Activated CD8-positive, alpha-beta T cell treated with anti-CD3 and anti-CD28 coated beads for 36 hours (primary cell): ENCODE measurements at regions of chr6 and their contacts with region 1.

Region 1: DNA sequence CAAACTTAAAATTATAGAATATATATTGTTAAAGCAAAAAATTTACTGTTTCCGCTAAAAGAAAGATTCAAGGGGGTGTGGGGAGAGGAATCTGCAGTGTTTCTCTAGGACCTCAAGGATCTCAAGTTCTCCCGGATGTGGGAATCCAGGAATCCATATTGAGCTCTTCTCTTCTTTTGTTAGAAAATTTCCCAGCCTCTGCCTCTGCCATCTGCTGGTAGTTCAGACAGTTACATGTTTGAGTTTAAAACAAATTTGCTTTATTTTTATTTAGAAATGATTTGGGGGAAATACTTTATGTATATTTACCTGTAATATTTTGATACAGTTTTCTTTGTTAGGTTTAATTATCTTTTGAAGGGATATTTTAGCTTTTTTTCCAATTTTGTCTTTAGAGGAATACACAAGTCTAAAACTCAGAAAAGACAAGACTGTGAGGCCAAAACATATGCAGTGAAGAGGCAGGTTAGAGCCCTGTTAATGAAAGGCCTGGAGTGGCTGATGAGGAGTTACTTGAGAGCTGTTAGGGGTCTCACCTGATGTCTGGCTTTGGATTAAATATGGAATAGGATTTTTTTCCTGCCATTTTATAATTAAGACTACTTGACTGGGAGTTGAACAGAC is 268.8 kb downstream of the ARID1B start:
- DNase-seq: no peak
- ATAC-seq: no peak
- H3K4me3 Mint-ChIP-seq: no peak overlapping the region
- H3K27ac Mint-ChIP-seq: no peak overlapping the region
- H3K4me1 Mint-ChIP-seq: peaks cover 14% of the 10 kb centered on the region
- H3K27me3 Mint-ChIP-seq: no peaks in the 10 kb centered on the region
- CTCF ChIP-seq: peak; percentile 69

Region 2: GRCh38 chr6:157087974-157088373 is 42.0 kb after region 1 on chr6:
- CTCF ChIA-PET with region 1: interaction called, 17 read pairs
- POLR2A ChIA-PET with region 1: no interaction called
- intact Hi-C with region 1: no loop called
- DNase-seq: no peak
- ATAC-seq: no peak
- H3K4me3 Mint-ChIP-seq: no peak overlapping the region
- H3K27ac Mint-ChIP-seq: no peak overlapping the region
- H3K4me1 Mint-ChIP-seq: peaks cover 3% of the 10 kb centered on the region
- H3K27me3 Mint-ChIP-seq: no peaks in the 10 kb centered on the region
- CTCF ChIP-seq: no peak

Region 3: GRCh38 chr6:157181647-157182046 is 135.7 kb after region 1 on chr6:
- CTCF ChIA-PET with region 1: no interaction called
- POLR2A ChIA-PET with region 1: no interaction called
- intact Hi-C with region 1: no loop called
- DNase-seq: no peak
- ATAC-seq: no peak
- H3K4me3 Mint-ChIP-seq: no peak overlapping the region
- H3K27ac Mint-ChIP-seq: no peak overlapping the region
- H3K4me1 Mint-ChIP-seq: no peaks in the 10 kb centered on the region
- H3K27me3 Mint-ChIP-seq: no peaks in the 10 kb centered on the region
- CTCF ChIP-seq: no peak

Region 4: GRCh38 chr6:157323255-157323965 is 277.5 kb after region 1 on chr6 and contains the start of gene TMEM242:
- CTCF ChIA-PET with region 1: no interaction called
- POLR2A ChIA-PET with region 1: no interaction called
- intact Hi-C with region 1: no loop called
- DNase-seq: peak; percentile 91
- ATAC-seq: peak; percentile 94
- H3K4me3 Mint-ChIP-seq: peak within 1 kb of the TSS; percentile 91
- H3K27ac Mint-ChIP-seq: peak within 1 kb of the TSS; percentile 88
- H3K4me1 Mint-ChIP-seq: peaks cover 31% of the 10 kb centered on the region
- H3K27me3 Mint-ChIP-seq: peaks cover 21% of the 10 kb centered on the region
- CTCF ChIP-seq: peak; percentile 16
- total RNA-seq, gene TMEM242: 7.8 to 8.0 TPM

Region 5: DNA sequence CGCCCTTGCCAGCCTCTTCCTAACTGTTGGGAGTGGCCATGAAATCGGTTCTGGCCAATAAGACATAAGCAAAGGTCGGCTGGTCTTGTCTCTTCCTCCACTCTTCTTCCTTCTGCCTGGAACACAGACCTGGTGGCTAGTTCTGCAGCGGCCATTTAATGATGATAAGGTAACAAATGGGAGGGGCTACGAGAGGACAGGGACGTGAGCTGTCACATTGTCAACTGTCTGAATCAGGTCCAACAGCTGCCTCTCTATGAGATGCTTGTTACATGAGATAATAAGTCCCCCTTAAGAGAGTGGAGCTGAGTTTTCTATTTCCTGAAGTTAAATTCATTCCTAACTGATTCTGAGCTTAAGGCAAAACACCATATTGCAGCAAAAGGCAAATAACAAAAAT is 289.9 kb after region 1 on chr6:
- CTCF ChIA-PET with region 1: no interaction called
- POLR2A ChIA-PET with region 1: no interaction called
- intact Hi-C with region 1: no loop called
- DNase-seq: no peak
- ATAC-seq: no peak
- H3K4me3 Mint-ChIP-seq: no peak overlapping the region
- H3K27ac Mint-ChIP-seq: no peak overlapping the region
- H3K4me1 Mint-ChIP-seq: no peaks in the 10 kb centered on the region
- H3K27me3 Mint-ChIP-seq: peaks cover 27% of the 10 kb centered on the region
- CTCF ChIP-seq: no peak